ENCODE measurements at regions of chr9 and their contacts with region 1.

Region 1: GRCh38 chr9:107222020-107222522 is 61.0 kb upstream of the RAD23B start:
- DNase-seq: no peak
- ATAC-seq: peak; percentile 78
- H3K4me3 ChIP-seq: peak overlapping the region; percentile 53 to 59
- H3K27ac ChIP-seq: peak overlapping the region; percentile 55
- H3K4me1 ChIP-seq: peaks cover 22 to 63% of the 10 kb centered on the region in 2 experiments
- H3K27me3 ChIP-seq: no peaks in the 10 kb centered on the region
- CTCF ChIP-seq: no peak
- POLR2A ChIP-seq: no peak
- RAD21 ChIP-seq: no peak; the same call in 1 of the 2 replicates

Region 2: DNA sequence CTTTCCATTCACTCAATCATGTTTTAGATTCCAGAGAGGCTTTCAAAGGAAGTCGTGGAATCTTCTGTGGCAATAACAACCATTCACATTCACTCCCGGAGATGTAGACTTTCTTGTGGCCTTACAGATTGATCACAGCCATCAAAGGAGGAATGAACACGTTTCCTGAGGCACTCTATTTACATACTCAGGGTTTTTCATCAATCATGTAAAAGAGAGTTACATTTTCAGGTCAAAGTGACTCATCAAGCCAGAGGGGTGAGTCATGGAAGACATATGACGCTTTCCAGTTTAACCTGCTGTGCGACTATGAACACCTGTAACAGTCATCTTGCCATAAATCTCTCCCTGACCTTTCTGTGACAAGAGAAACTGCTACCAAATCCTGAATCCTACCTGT is 21.7 kb after region 1 on chr9:
- CTCF ChIA-PET with region 1: no interaction called
- POLR2A ChIA-PET with region 1: interaction called, 6 read pairs
- RAD21 ChIA-PET with region 1: interaction called, 3 read pairs
- intact Hi-C with region 1: loop called (anchors 2 kb)
- DNase-seq: peak; percentile 99
- ATAC-seq: peak; percentile 79
- H3K4me3 ChIP-seq: peak overlapping the region in 1 of 2 experiments; percentile 38; a peak in 2 of 4 replicates
- H3K27ac ChIP-seq: peak overlapping the region; percentile 96
- H3K4me1 ChIP-seq: peaks cover 79 to 98% of the 10 kb centered on the region in 2 experiments
- H3K27me3 ChIP-seq: no peaks in the 10 kb centered on the region
- CTCF ChIP-seq: no peak
- POLR2A ChIP-seq: no peak
- RAD21 ChIP-seq: peak; percentile 48

Region 3: GRCh38 chr9:107292821-107293542 is 70.9 kb after region 1 on chr9:
- CTCF ChIA-PET with region 1: no interaction called
- POLR2A ChIA-PET with region 1: no interaction called
- RAD21 ChIA-PET with region 1: no interaction called
- intact Hi-C with region 1: no loop called
- DNase-seq: no peak
- ATAC-seq: peak; percentile 27; the same call in 1 of the 2 replicates
- H3K4me3 ChIP-seq: no peak overlapping the region
- H3K27ac ChIP-seq: no peak overlapping the region
- H3K4me1 ChIP-seq: peaks cover 31 to 81% of the 10 kb centered on the region in 2 experiments
- H3K27me3 ChIP-seq: no peaks in the 10 kb centered on the region
- CTCF ChIP-seq: no peak
- POLR2A ChIP-seq: no peak
- RAD21 ChIP-seq: no peak

Region 4: GRCh38 chr9:107340920-107341632 is 119.0 kb after region 1 on chr9:
- CTCF ChIA-PET with region 1: interaction called, 4 read pairs
- POLR2A ChIA-PET with region 1: no interaction called
- RAD21 ChIA-PET with region 1: no interaction called
- intact Hi-C with region 1: loop called (anchors 2 kb)
- DNase-seq: peak; percentile 46
- ATAC-seq: peak; percentile 83
- H3K4me3 ChIP-seq: no peak overlapping the region
- H3K27ac ChIP-seq: peak overlapping the region; percentile 47
- H3K4me1 ChIP-seq: peaks cover 3 to 18% of the 10 kb centered on the region in 2 experiments; a peak in 3 of 4 replicates
- H3K27me3 ChIP-seq: no peaks in the 10 kb centered on the region
- CTCF ChIP-seq: peak; percentile 71 to 95 (median 94)
- POLR2A ChIP-seq: no peak
- RAD21 ChIP-seq: peak; percentile 81

Measured in HCT116 (cell line).